Natural killer cell (primary cell): ENCODE measurements at regions of chr1 and their contacts with region 1.

Region 1: DNA sequence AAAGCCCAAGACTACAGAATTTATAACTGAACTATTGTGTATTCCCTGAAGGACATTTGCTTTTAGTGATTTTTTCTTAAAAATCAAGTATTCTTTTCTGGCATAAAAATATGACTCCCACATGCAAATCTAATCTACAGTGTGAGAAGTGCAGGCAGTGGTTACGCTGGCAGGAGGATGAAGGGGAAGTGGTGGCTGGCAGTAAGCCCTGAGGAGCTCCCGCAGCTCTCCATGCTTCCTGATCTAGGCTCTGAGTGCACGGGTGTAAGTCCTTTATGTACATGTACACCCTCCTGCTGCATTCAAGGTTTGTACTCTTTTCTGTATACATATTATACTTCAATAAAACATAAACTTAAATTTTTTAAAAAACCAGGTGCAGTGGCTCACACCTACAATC is 67.5 kb upstream of the PRDX6 start:
- DNase-seq: peak in 1 of 2 donors; percentile 51
- ATAC-seq: no peak
- H3K4me3 ChIP-seq: no peak overlapping the region
- H3K4me3 Mint-ChIP-seq: peak overlapping the region; percentile 25
- H3K27ac ChIP-seq: peak overlapping the region; percentile 8
- H3K27ac Mint-ChIP-seq: peak overlapping the region; percentile 74 to 87
- H3K4me1 ChIP-seq: peaks cover 43% of the 10 kb centered on the region
- H3K4me1 Mint-ChIP-seq: peaks cover 40 to 41% of the 10 kb centered on the region in 2 donors
- H3K27me3 ChIP-seq: no peaks in the 10 kb centered on the region
- H3K27me3 Mint-ChIP-seq: peaks cover 0 to 4% of the 10 kb centered on the region in 2 donors
- CTCF ChIP-seq: no peak

Region 2: GRCh38 chr1:173330149-173330951 is 79.3 kb before region 1 on chr1:
- intact Hi-C with region 1: no loop called
- DNase-seq: no peak
- ATAC-seq: no peak
- H3K4me3 ChIP-seq: no peak overlapping the region
- H3K4me3 Mint-ChIP-seq: no peak overlapping the region
- H3K27ac ChIP-seq: no peak overlapping the region
- H3K27ac Mint-ChIP-seq: no peak overlapping the region
- H3K4me1 ChIP-seq: no peaks in the 10 kb centered on the region
- H3K4me1 Mint-ChIP-seq: peaks cover 11% of the 10 kb centered on the region in 2 donors
- H3K27me3 ChIP-seq: no peaks in the 10 kb centered on the region
- H3K27me3 Mint-ChIP-seq: no peaks in the 10 kb centered on the region
- CTCF ChIP-seq: no peak

Region 3: GRCh38 chr1:174743654-174744561 is 1334.3 kb after region 1 on chr1:
- intact Hi-C with region 1: loop called (anchors 10 kb)
- DNase-seq: peak in 1 of 2 donors; percentile 74
- ATAC-seq: peak; percentile 52 to 64 (median 55)
- H3K4me3 ChIP-seq: no peak overlapping the region
- H3K4me3 Mint-ChIP-seq: no peak overlapping the region
- H3K27ac ChIP-seq: no peak overlapping the region
- H3K27ac Mint-ChIP-seq: no peak overlapping the region
- H3K4me1 ChIP-seq: no peaks in the 10 kb centered on the region
- H3K4me1 Mint-ChIP-seq: peaks cover 5 to 7% of the 10 kb centered on the region in 2 donors
- H3K27me3 ChIP-seq: no peaks in the 10 kb centered on the region
- H3K27me3 Mint-ChIP-seq: no peaks in the 10 kb centered on the region
- CTCF ChIP-seq: peak; percentile 71